PC-3 (cell line): ENCODE measurements at regions of chr9 and their contacts with region 1.

Region 1: DNA sequence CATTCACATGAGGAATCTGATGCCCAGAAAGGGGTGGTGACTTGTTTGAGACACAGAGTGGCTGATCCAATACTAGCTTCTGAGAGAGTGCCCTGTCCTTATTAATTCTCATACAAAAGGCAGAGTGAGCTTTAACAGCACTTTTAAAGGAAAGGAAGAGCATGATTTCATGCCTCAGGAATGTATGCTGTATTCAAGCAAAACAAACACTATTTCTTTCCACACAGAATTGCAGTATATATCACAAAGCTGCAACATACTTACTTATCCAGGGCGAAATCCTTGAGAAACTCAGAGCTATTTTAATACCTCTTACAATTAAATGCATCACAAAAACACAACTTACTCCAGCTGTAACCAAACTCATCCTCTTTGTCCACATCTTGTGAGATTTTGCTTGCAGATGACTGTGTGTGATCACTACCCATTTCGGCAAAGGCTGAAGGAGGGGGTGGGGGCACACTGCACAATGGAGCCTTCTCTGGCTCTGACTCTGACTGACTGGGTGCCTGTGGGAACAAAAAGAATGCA is 139.8 kb downstream of the MPDZ start:
- DNase-seq: peak; percentile 82
- ATAC-seq: peak; percentile 87
- H3K4me3 ChIP-seq: peak overlapping the region; percentile 49
- H3K27ac ChIP-seq: peak overlapping the region; percentile 54
- H3K4me1 ChIP-seq: peaks cover 30% of the 10 kb centered on the region
- H3K27me3 ChIP-seq: no peaks in the 10 kb centered on the region
- CTCF ChIP-seq: no peak

Region 2: DNA sequence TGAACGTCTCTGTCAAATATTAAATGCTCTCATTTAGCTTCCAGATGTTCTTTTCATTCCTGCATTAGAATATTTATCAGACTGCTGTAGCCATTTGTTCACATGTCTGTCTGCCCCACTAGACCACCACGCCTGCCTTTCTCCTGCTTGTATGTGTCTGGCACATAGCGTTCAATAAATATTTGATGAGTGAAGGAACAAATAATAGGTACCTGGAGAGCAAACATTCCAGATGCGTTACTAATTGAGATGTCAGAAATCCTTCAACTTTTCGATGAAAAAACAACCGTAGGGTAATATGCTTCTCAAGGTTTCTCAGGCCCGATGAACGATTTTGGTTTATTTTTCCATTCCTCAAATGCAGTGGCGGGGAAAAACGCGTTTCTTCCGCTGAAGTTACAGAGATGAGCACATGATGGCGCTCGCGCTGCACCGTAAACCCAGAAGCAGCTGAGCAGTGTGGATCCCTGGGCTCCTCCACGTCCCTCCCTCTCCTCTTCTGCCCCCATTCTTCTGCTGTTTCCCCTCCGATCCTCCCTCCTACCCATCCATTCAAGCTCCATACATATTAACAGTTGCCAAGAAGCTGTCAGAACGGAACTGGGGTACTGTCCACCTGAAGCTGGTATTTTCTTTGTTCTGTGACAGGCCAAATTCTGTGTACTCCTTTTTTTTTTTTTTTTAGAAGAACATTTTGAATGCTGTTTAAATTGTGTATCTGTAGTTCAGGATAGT is 105.6 kb before region 1 on chr9:
- CTCF ChIA-PET with region 1: no interaction called
- POLR2A ChIA-PET with region 1: no interaction called
- intact Hi-C with region 1: loop called (anchors 5 kb)
- DNase-seq: peak; percentile 84
- ATAC-seq: peak; percentile 81
- H3K4me3 ChIP-seq: peak overlapping the region; percentile 65
- H3K27ac ChIP-seq: peak overlapping the region; percentile 31; the same call in 1 of the 2 replicates
- H3K4me1 ChIP-seq: peaks cover 26% of the 10 kb centered on the region
- H3K27me3 ChIP-seq: no peaks in the 10 kb centered on the region
- CTCF ChIP-seq: peak; percentile 79

Region 3: DNA sequence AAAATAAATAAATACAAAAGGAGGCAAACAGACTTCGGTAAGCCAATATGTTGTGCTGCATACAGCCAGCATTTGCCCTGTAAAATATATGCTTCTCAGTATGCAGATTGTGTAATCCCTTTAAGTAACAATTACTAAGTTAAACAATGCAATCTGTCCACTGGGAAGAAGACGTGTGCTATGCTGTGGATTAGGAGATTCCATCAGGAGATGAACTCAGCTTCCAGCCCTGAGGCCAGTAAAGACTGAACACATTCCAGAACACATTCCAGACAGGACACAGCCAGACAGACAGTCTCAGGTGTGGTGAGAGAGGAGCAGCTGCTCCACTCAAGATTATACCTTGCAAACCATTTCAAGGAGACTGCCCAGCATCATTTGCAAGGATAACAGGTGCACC is 41.9 kb after region 1 on chr9:
- CTCF ChIA-PET with region 1: no interaction called
- POLR2A ChIA-PET with region 1: no interaction called
- intact Hi-C with region 1: loop called (anchors 10 kb)
- DNase-seq: peak; percentile 72
- ATAC-seq: peak; percentile 73
- H3K4me3 ChIP-seq: no peak overlapping the region
- H3K27ac ChIP-seq: no peak overlapping the region
- H3K4me1 ChIP-seq: peaks cover 12% of the 10 kb centered on the region
- H3K27me3 ChIP-seq: no peaks in the 10 kb centered on the region
- CTCF ChIP-seq: no peak

Region 4: GRCh38 chr9:13513716-13514444 is 374.2 kb after region 1 on chr9:
- CTCF ChIA-PET with region 1: no interaction called
- POLR2A ChIA-PET with region 1: no interaction called
- intact Hi-C with region 1: no loop called
- DNase-seq: peak; percentile 58
- ATAC-seq: peak; percentile 90
- H3K4me3 ChIP-seq: no peak overlapping the region
- H3K27ac ChIP-seq: peak overlapping the region; percentile 42
- H3K4me1 ChIP-seq: peaks cover 14% of the 10 kb centered on the region
- H3K27me3 ChIP-seq: no peaks in the 10 kb centered on the region
- CTCF ChIP-seq: no peak